Psoas muscle (tissue), 8 donors: ENCODE measurements at regions of chr6 and their contacts with region 1.

Region 1: DNA sequence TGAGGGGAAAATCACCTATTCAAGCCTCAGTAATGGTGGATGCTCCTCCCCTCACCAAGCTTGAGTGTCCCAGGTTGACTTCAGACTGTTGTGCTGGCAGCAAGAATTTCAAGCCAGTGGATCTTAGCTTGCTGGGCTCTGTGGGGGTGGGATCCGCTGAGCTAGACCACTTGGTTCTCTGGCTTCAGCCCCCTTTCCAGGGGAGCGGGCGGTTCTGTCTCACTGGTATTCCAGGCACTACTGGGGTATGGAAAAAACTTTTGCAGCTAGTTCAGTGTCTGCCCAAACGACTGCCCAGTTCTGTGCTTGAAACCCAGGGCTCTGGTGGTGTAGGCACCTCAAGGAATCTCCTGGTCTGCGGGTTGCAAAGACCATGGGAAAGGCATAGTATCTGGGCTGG is 42.9 kb upstream of the UFL1 start:
- DNase-seq: no peak
- ATAC-seq: no peak
- H3K4me3 ChIP-seq: no peak overlapping the region
- H3K27ac ChIP-seq: no peak overlapping the region
- H3K4me1 ChIP-seq: no peaks in the 10 kb centered on the region
- H3K27me3 ChIP-seq: no peaks in the 10 kb centered on the region
- CTCF ChIP-seq: no peak

Region 2: GRCh38 chr6:96410467-96410866 is 68.2 kb before region 1 on chr6:
- intact Hi-C with region 1: no loop called
- DNase-seq: no peak
- ATAC-seq: no peak
- H3K4me3 ChIP-seq: no peak overlapping the region
- H3K27ac ChIP-seq: no peak overlapping the region
- H3K4me1 ChIP-seq: no peaks in the 10 kb centered on the region
- H3K27me3 ChIP-seq: no peaks in the 10 kb centered on the region
- CTCF ChIP-seq: no peak

Region 3: GRCh38 chr6:98039869-98040607 is 1561.3 kb after region 1 on chr6:
- intact Hi-C with region 1: loop called in 1 of 2 experiments (anchors 10 kb)
- DNase-seq: no peak
- ATAC-seq: no peak
- H3K4me3 ChIP-seq: no peak overlapping the region
- H3K27ac ChIP-seq: no peak overlapping the region
- H3K4me1 ChIP-seq: no peaks in the 10 kb centered on the region
- H3K27me3 ChIP-seq: peaks cover 0 to 3% (median 2%) of the 10 kb centered on the region in 3 donors
- CTCF ChIP-seq: no peak